ENCODE measurements at regions of chr9 and their contacts with region 1.

Region 1: GRCh38 chr9:2087500-2088313 is 72.6 kb downstream of the SMARCA2 start:
- DNase-seq: peak in 7 of 9 donors; percentile 36 to 64 (median 58)
- ATAC-seq: peak; percentile 97
- H3K4me3 ChIP-seq: no peak overlapping the region
- H3K4me3 Mint-ChIP-seq: no peak overlapping the region
- H3K27ac ChIP-seq: no peak overlapping the region
- H3K27ac Mint-ChIP-seq: peak overlapping the region in 4 of 9 donors; percentile 0 to 8 (median 4)
- H3K4me1 ChIP-seq: no peaks in the 10 kb centered on the region
- H3K4me1 Mint-ChIP-seq: peaks cover 0 to 11% (median 6%) of the 10 kb centered on the region in 7 donors
- H3K27me3 ChIP-seq: no peaks in the 10 kb centered on the region
- H3K27me3 Mint-ChIP-seq: no peaks in the 10 kb centered on the region

Region 2: GRCh38 chr9:893843-894420 is 1193.8 kb before region 1 on chr9:
- CTCF ChIA-PET with region 1: no interaction called
- POLR2A ChIA-PET with region 1: no interaction called
- intact Hi-C with region 1: loop called in 1 of 2 experiments (anchors 5 kb)
- DNase-seq: peak in 8 of 9 donors; percentile 7 to 50 (median 37)
- ATAC-seq: peak; percentile 94
- H3K4me3 ChIP-seq: no peak overlapping the region
- H3K4me3 Mint-ChIP-seq: peak overlapping the region in 9 of 10 donors; percentile 23 to 70 (median 48)
- H3K27ac ChIP-seq: no peak overlapping the region
- H3K27ac Mint-ChIP-seq: peak overlapping the region in 2 of 9 donors; percentile 31 to 52
- H3K4me1 ChIP-seq: peaks cover 0 to 5% of the 10 kb centered on the region in 2 donors
- H3K4me1 Mint-ChIP-seq: peaks cover 4 to 11% (median 8%) of the 10 kb centered on the region in 7 donors
- H3K27me3 ChIP-seq: no peaks in the 10 kb centered on the region
- H3K27me3 Mint-ChIP-seq: peaks cover 7 to 24% (median 14%) of the 10 kb centered on the region in 5 donors

Region 3: GRCh38 chr9:1460143-1460769 is 627.5 kb before region 1 on chr9:
- CTCF ChIA-PET with region 1: no interaction called
- POLR2A ChIA-PET with region 1: no interaction called
- intact Hi-C with region 1: loop called in 1 of 2 experiments (anchors 5 kb)
- DNase-seq: peak in 1 of 9 donors; percentile 1
- ATAC-seq: no peak
- H3K4me3 ChIP-seq: no peak overlapping the region
- H3K4me3 Mint-ChIP-seq: no peak overlapping the region
- H3K27ac ChIP-seq: no peak overlapping the region
- H3K27ac Mint-ChIP-seq: no peak overlapping the region
- H3K4me1 ChIP-seq: no peaks in the 10 kb centered on the region
- H3K4me1 Mint-ChIP-seq: no peaks in the 10 kb centered on the region
- H3K27me3 ChIP-seq: no peaks in the 10 kb centered on the region
- H3K27me3 Mint-ChIP-seq: peaks cover 0 to 7% (median 4%) of the 10 kb centered on the region in 5 donors

Region 4: DNA sequence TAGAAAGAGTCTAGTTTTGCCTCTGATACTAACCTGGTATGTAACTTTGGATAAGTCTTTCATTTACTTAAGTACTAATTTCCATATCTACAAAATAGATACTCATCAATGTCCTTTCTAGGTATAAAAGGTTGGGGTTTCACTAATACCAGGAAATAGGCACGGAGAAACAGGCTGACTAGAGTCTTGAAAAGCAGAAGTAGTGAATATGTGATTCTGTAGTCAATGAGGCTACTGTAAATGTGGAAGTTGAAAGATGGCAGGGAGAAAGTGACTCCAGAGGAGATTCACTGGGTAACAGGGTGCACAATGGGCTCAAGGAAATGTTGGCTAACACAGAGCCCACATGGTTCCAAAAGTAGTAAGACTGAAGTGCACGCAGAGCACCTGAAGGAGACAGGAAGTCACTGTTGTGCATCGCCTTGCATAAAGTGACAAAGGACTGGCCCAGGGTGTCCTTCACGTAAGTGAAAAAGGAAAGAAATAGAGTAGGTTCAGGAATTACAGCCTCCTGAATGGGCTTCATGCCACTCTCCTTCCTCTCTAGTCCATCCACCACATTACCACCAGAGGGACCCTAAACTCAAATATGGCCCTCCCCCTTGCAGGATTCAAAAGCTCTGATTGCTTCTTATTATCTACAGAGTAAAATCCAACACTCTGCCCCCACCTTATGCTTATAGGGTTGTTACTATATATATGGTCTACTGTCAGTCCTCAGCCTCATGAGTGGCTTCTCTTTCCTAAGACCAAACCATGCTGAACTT is 360.5 kb before region 1 on chr9:
- CTCF ChIA-PET with region 1: interaction called, 5 read pairs
- POLR2A ChIA-PET with region 1: no interaction called
- intact Hi-C with region 1: loop called in 1 of 2 experiments (anchors 1 kb)
- DNase-seq: peak in 5 of 9 donors; percentile 3 to 28 (median 8)
- ATAC-seq: no peak
- H3K4me3 ChIP-seq: no peak overlapping the region
- H3K4me3 Mint-ChIP-seq: no peak overlapping the region
- H3K27ac ChIP-seq: no peak overlapping the region
- H3K27ac Mint-ChIP-seq: no peak overlapping the region
- H3K4me1 ChIP-seq: no peaks in the 10 kb centered on the region
- H3K4me1 Mint-ChIP-seq: no peaks in the 10 kb centered on the region
- H3K27me3 ChIP-seq: no peaks in the 10 kb centered on the region
- H3K27me3 Mint-ChIP-seq: peaks cover 0 to 20% (median 11%) of the 10 kb centered on the region in 5 donors

Region 5: GRCh38 chr9:1922026-1922425 is 165.7 kb before region 1 on chr9:
- CTCF ChIA-PET with region 1: interaction called, 5 read pairs
- POLR2A ChIA-PET with region 1: no interaction called
- intact Hi-C with region 1: loop called in 1 of 2 experiments (anchors 5 kb)
- DNase-seq: no peak
- ATAC-seq: no peak
- H3K4me3 ChIP-seq: no peak overlapping the region
- H3K4me3 Mint-ChIP-seq: no peak overlapping the region
- H3K27ac ChIP-seq: no peak overlapping the region
- H3K27ac Mint-ChIP-seq: no peak overlapping the region
- H3K4me1 ChIP-seq: no peaks in the 10 kb centered on the region
- H3K4me1 Mint-ChIP-seq: no peaks in the 10 kb centered on the region
- H3K27me3 ChIP-seq: no peaks in the 10 kb centered on the region
- H3K27me3 Mint-ChIP-seq: peaks cover 10 to 20% (median 19%) of the 10 kb centered on the region in 5 donors

Region 6: DNA sequence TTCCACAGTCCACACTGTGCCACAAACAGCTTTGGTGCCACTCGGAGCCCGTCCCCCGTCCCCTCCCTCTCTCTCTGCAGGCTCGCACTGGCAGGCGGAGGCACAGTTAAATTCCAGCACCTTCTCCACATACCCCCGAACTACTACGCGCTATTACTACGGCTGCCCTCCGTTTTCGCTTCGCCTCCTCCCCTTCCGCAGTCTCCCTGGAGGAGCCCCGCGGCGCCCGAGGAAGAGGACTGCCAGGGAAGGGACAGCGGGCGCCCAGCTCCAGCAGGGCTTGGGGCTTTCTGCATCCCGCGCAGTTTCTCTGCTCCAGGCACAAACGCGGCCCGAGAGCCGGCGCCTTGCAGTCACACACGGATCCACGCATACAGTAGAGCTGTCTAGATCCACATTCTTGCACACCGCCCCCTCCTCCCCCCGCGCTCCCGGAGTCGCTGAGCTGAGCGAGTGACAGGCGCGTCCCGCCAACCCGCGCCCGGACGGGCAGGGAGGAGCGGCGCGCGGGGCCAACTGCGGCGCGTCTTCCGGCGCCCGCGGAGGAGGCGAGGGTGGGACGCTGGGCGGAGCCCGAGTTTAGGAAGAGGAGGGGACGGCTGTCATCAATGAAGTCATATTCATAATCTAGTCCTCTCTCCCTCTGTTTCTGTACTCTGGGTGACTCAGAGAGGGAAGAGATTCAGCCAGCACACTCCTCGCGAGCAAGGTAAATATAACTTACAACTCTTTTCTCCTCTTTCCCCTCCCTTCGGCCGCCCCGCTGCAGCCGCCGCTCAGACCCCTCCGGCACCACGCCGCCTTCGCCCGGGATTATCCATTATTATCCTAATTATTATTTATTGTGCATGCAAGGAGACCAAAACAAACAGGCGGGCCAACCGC is 72.8 kb before region 1 on chr9 and contains the start of gene SMARCA2:
- CTCF ChIA-PET with region 1: interaction called, 3 read pairs
- POLR2A ChIA-PET with region 1: interaction called, 3 read pairs
- intact Hi-C with region 1: loop called (anchors 1 to 2 kb)
- DNase-seq: peak; percentile 96 to 98 (median 97)
- ATAC-seq: peak; percentile 90
- H3K4me3 ChIP-seq: peak within 1 kb of the TSS; percentile 98
- H3K4me3 Mint-ChIP-seq: peak within 1 kb of the TSS; percentile 93 to 100 (median 98)
- H3K27ac ChIP-seq: peak within 1 kb of the TSS; percentile 92
- H3K27ac Mint-ChIP-seq: peak within 1 kb of the TSS; percentile 97 to 100 (median 99)
- H3K4me1 ChIP-seq: peaks cover 16 to 18% of the 10 kb centered on the region in 2 donors
- H3K4me1 Mint-ChIP-seq: peaks cover 21 to 60% (median 32%) of the 10 kb centered on the region in 7 donors
- H3K27me3 ChIP-seq: no peaks in the 10 kb centered on the region
- H3K27me3 Mint-ChIP-seq: peaks cover 0 to 24% (median 0%) of the 10 kb centered on the region in 5 donors
- total RNA-seq, gene SMARCA2: 233 to 294 (median 258) TPM

Region 7: DNA sequence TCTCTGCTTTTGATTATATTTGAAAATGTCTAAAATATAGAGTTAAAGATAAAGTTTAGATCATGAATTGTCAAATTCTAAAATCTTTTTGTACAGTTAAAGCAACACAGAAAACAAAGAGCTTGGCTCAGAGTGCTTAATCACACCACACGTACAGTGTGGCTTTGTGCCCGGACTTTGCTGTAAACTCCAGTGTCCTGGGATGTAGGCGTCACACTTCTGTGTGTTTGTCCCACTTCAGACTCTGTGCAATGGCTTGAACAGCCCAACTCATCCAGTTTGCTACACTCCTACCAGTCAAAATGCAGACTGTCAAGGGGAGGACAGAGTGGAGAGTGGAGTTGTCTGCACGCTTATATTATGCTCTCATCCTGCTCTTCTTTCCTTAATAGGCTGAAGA is 27.3 kb before region 1 on chr9:
- CTCF ChIA-PET with region 1: interaction called, 9 read pairs
- POLR2A ChIA-PET with region 1: no interaction called
- intact Hi-C with region 1: loop called (anchors 1 to 2 kb)
- DNase-seq: no peak
- ATAC-seq: no peak
- H3K4me3 ChIP-seq: no peak overlapping the region
- H3K4me3 Mint-ChIP-seq: no peak overlapping the region
- H3K27ac ChIP-seq: no peak overlapping the region
- H3K27ac Mint-ChIP-seq: peak overlapping the region in 3 of 9 donors; percentile 5 to 41 (median 36)
- H3K4me1 ChIP-seq: peaks cover 0 to 3% of the 10 kb centered on the region in 2 donors
- H3K4me1 Mint-ChIP-seq: peaks cover 4 to 30% (median 9%) of the 10 kb centered on the region in 7 donors
- H3K27me3 ChIP-seq: no peaks in the 10 kb centered on the region
- H3K27me3 Mint-ChIP-seq: no peaks in the 10 kb centered on the region

Measured in naive thymus-derived CD4-positive, alpha-beta T cell (primary cell).